H1 (cell line): ENCODE measurements at regions of chr1 and their contacts with region 1.

Region 1: DNA sequence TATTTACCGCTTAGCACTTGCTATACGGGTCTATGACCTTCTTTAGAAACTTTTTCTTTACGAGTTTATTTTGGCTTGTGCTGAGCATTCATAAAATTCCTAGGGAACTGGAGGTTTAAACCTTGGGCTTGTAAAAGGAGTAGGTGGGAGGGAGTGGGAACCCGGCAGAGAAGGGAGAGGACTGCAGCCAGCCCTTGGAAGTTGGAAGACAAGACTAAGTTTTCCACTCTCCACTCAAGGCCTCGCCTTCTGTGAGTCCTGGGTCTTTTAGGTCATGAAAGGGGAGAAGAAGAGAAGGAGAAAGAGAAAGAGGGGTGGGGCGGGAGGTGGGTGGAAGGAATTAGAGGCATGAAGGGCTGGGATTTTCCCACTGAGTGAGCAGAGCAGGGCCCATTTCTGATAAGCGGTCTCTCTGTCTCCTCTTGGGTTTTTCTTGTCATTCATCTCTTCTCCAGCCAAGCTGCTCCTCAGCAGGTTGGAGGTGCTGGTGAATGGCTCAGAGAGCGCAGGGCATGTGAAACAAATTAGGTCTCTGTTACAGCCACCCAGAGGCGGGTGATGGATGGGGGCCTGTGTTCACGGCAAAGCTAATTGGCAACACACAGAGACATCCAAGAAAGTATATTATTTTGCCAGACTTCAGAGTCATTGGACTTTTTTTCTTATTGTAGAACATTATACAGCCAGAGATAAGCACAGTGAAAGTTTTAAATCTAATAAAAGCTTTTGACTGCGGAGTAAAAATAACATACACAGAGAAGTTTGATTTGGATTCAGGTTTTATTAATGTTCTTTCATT is 247.3 kb downstream of the FOXD2 start:
- DNase-seq: peak in 1 of 2 experiments; percentile 33
- H3K4me3 ChIP-seq: no peak overlapping the region
- H3K27ac ChIP-seq: no peak overlapping the region
- H3K4me1 ChIP-seq: peaks cover 9 to 19% (median 14%) of the 10 kb centered on the region in 4 experiments
- H3K27me3 ChIP-seq: no peaks in the 10 kb centered on the region; a peak in 2 of 7 replicates
- CTCF ChIP-seq: no peak
- EP300 ChIP-seq: no peak
- POLR2A ChIP-seq: no peak
- RAD21 ChIP-seq: no peak

Region 2: DNA sequence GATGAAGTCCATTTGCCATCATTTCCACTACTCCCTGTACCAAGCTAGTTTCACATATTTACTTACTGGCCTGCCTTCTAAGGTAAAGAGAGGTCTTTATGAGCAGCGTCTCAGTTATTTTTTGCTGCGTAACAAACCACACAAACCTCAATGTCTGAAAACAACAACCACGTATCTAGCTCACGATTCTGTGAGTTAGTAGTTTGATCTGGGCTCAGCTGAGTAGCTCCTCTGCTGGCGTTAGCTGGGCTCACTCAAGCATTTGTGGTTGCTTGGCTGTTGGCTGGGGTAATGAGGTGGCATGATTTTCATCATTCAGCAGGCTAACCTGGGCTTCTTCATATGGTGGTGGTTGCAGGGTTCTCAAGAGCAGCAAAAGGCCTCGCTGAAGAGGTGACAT is 21.9 kb before region 1 on chr1:
- CTCF ChIA-PET with region 1: interaction called, 13 read pairs
- POLR2A ChIA-PET with region 1: no interaction called
- DNase-seq: no peak
- H3K4me3 ChIP-seq: no peak overlapping the region
- H3K27ac ChIP-seq: no peak overlapping the region
- H3K4me1 ChIP-seq: no peaks in the 10 kb centered on the region
- H3K27me3 ChIP-seq: peaks cover 4 to 19% (median 12%) of the 10 kb centered on the region in 4 experiments
- CTCF ChIP-seq: no peak
- EP300 ChIP-seq: no peak
- POLR2A ChIP-seq: no peak
- RAD21 ChIP-seq: no peak

Region 3: DNA sequence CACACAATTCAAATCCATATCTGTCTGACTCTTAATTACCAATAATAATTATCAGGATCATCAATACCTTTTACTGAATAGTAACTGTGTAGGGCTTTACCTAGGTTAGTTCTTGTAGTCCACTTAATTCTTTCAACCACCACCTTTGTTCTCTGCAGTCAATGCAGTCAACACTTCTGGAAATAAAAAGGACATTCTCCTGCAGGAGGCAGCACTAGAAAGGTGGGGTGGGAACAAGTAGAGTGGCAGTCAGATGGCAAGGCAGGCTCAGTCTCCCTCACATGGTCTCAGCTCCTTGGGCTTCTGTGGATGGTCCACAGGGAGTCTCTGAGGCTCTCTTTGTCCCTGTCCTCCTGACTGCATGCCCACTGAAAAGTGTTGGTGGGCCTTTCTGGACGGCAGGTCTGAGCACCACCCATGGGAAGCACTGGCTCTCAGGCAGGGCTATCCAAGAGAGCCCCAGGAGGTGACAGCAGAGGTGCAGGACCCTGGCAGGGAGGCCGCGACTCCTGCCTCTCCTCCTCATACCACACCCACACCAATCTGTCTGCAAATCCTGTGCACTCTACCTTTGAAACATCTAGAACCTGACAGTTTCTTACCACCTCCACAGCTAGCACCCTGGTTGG is 10.0 kb before region 1 on chr1:
- CTCF ChIA-PET with region 1: interaction called, 24 read pairs
- POLR2A ChIA-PET with region 1: interaction called, 3 read pairs
- DNase-seq: peak in 1 of 2 experiments; percentile 39
- H3K4me3 ChIP-seq: no peak overlapping the region
- H3K27ac ChIP-seq: no peak overlapping the region
- H3K4me1 ChIP-seq: peaks cover 0 to 4% (median 0%) of the 10 kb centered on the region in 4 experiments; a peak in 1 of 7 replicates
- H3K27me3 ChIP-seq: peaks cover 0 to 7% (median 2%) of the 10 kb centered on the region in 4 experiments; a peak in 2 of 7 replicates
- CTCF ChIP-seq: peak in 1 of 3 experiments; percentile 26; a peak in 1 of 4 replicates
- EP300 ChIP-seq: no peak
- POLR2A ChIP-seq: no peak
- RAD21 ChIP-seq: no peak; a peak in 1 of 4 replicates

Region 4: GRCh38 chr1:47703981-47704596 is 18.9 kb after region 1 on chr1:
- CTCF ChIA-PET with region 1: interaction called, 41 read pairs
- POLR2A ChIA-PET with region 1: no interaction called
- DNase-seq: no peak
- H3K4me3 ChIP-seq: no peak overlapping the region
- H3K27ac ChIP-seq: no peak overlapping the region
- H3K4me1 ChIP-seq: peaks cover 0 to 9% (median 1%) of the 10 kb centered on the region in 4 experiments; a peak in 3 of 7 replicates
- H3K27me3 ChIP-seq: peaks cover 19 to 34% (median 32%) of the 10 kb centered on the region in 4 experiments
- CTCF ChIP-seq: peak in 1 of 3 experiments; percentile 4; a peak in 1 of 4 replicates
- EP300 ChIP-seq: no peak
- POLR2A ChIP-seq: no peak
- RAD21 ChIP-seq: peak; percentile 20 to 42; a peak in 3 of 4 replicates

Region 5: DNA sequence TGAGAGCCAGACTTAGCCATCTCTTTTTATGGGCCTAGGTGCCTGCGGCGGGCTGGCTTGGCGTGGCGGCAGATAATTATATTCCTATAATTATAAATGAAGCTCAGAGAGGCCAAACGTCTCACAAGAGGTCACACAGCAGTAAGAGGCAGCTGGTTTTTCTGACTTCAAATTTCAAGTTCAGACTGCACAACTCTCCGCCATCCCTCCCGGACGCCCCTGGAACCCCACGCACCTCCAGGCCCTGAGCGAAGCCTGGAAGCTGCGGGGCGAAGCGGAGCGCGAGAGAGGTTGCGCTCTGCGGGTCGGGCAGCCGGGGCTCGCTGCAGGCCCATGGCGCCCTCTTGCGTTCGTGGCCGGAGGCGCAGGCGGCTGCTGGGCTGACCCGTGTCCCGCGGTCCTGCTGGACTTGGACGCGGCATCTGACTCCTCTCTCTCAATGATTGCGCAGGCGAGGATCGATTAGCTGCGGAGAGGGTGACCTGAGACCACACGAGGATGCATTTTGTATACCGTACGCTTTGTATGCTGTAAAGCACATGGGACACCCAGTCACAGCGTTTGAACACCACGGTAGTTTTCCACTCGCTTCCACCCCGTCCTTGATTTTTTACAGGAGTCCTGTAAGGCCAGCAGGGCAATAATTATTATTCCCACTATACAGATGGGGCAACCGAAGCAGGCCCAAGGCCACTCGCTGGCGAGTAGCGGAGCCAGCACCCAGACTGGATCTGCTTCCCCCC is 25.3 kb after region 1 on chr1:
- CTCF ChIA-PET with region 1: interaction called, 41 read pairs
- POLR2A ChIA-PET with region 1: no interaction called
- DNase-seq: peak in 1 of 2 experiments; percentile 97
- H3K4me3 ChIP-seq: peak overlapping the region; percentile 20 to 63 (median 47); a peak in 4 of 8 replicates
- H3K27ac ChIP-seq: no peak overlapping the region
- H3K4me1 ChIP-seq: peaks cover 0 to 19% (median 5%) of the 10 kb centered on the region in 4 experiments; a peak in 3 of 7 replicates
- H3K27me3 ChIP-seq: peaks cover 44 to 74% (median 71%) of the 10 kb centered on the region in 4 experiments
- CTCF ChIP-seq: peak; percentile 93 to 97 (median 97)
- EP300 ChIP-seq: no peak
- POLR2A ChIP-seq: no peak
- RAD21 ChIP-seq: peak; percentile 93 to 96